HCT116 (cell line): ENCODE measurements at regions of chr12 and their contacts with region 1.

Region 1: GRCh38 chr12:76348079-76348901 is at the start of gene BBS10:
- DNase-seq: peak; percentile 83
- ATAC-seq: peak; percentile 91
- H3K4me3 ChIP-seq: peak within 1 kb of the TSS; percentile 77 to 88
- H3K27ac ChIP-seq: peak within 1 kb of the TSS; percentile 86
- H3K4me1 ChIP-seq: peaks cover 23 to 48% of the 10 kb centered on the region in 2 experiments; a peak in 3 of 4 replicates
- H3K27me3 ChIP-seq: no peaks in the 10 kb centered on the region
- CTCF ChIP-seq: peak; percentile 33 to 63 (median 49); a peak in 4 of 6 replicates
- POLR2A ChIP-seq: peak; percentile 5
- RAD21 ChIP-seq: peak; percentile 44
- total RNA-seq, gene BBS10: 27.1 TPM

Region 2: DNA sequence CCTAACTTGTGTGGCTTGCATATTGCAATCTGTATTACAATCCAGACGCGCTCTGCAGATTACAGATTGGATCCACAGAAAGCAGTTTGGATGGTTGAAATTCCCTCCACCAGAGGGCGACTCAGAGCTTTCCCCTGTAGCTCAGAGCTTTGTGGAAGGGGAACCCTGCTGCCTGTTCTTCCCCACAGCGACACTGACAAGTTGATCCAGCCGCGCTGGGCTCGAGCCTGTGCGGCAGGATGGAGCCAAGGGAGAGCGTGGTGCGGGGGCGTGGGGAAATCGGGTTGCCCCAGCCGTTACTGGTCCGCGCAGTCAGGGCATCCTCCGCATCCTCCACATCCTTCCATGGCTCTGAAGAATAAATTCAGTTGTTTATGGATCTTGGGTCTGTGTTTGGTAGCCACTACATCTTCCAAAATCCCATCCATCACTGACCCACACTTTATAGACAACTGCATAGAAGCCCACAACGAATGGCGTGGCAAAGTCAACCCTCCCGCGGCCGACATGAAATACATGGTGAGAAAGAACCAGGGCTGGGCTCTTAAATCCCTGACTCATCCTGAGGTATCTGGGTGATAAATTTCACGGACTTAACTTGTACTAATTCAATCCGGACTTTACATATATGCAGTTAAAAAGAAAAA is 1013.8 kb before region 1 on chr12 and contains the start of gene GLIPR1L1:
- CTCF ChIA-PET with region 1: no interaction called
- POLR2A ChIA-PET with region 1: no interaction called
- RAD21 ChIA-PET with region 1: no interaction called
- intact Hi-C with region 1: loop called (anchors 5 kb)
- DNase-seq: peak; percentile 92
- ATAC-seq: peak; percentile 86
- H3K4me3 ChIP-seq: peak within 1 kb of the TSS; percentile 42 to 57
- H3K27ac ChIP-seq: peak within 1 kb of the TSS; percentile 63
- H3K4me1 ChIP-seq: peaks cover 16 to 25% of the 10 kb centered on the region in 2 experiments
- H3K27me3 ChIP-seq: no peaks in the 10 kb centered on the region
- CTCF ChIP-seq: peak; percentile 75 to 83 (median 75)
- POLR2A ChIP-seq: no peak
- RAD21 ChIP-seq: peak; percentile 86
- total RNA-seq, gene GLIPR1L1: not detected

Region 3: DNA sequence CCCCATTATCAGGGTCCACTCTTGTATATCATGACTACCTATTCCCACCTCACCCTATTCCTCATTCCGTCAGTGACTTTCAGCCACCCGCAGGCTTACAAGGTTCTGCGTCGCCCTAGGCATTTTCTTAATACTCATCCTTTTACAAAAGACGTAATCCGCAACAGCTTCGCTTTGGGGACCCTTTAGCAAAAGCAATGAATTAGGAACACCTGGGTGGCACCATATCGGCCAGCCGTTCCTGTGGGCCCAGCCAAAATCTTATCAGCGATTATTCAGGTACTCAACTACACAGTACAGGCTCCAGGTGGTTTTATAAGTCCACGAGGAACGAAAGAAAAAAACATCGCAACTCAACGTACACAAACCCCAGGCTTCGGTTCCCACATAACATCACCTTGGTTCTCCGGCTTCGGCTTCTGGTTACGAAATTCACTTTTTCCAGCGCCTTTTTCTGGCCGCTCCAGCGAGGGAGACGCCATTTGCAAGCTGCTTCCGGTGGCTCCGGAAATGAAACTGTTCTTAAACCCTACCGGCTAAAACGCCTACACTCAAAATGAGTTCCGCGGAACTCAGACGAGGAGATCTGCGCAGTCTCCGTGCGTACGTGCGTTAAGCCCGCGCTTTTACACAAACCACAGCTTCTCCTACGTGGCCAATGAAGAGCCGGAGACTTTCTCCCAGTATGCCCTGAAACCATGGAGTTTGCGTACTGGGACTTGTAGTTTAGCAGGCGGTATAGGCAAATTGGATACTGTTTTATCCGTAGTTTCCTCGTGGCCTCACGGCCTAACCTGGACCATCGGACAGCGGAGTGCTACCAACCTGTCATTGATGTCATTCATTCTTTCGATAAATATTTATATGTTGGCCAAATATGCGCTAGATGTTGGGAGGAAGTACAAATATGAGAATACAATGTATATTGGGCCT is 836.9 kb before region 1 on chr12 and contains the start of gene KRR1:
- CTCF ChIA-PET with region 1: no interaction called
- POLR2A ChIA-PET with region 1: no interaction called
- RAD21 ChIA-PET with region 1: no interaction called
- intact Hi-C with region 1: loop called (anchors 5 kb)
- DNase-seq: peak; percentile 99
- ATAC-seq: peak; percentile 99
- H3K4me3 ChIP-seq: peak within 1 kb of the TSS; percentile 77 to 90
- H3K27ac ChIP-seq: peak within 1 kb of the TSS; percentile 61
- H3K4me1 ChIP-seq: peaks cover 19 to 32% of the 10 kb centered on the region in 2 experiments
- H3K27me3 ChIP-seq: no peaks in the 10 kb centered on the region
- CTCF ChIP-seq: 0 out of 6 replicates have a peak, but pooled peaks of 1 of the 3 experiments have one; percentile 3
- POLR2A ChIP-seq: peak; percentile 27
- RAD21 ChIP-seq: peak; percentile 21; the same call in 1 of the 2 replicates
- total RNA-seq, gene KRR1: 192 TPM

Region 4: DNA sequence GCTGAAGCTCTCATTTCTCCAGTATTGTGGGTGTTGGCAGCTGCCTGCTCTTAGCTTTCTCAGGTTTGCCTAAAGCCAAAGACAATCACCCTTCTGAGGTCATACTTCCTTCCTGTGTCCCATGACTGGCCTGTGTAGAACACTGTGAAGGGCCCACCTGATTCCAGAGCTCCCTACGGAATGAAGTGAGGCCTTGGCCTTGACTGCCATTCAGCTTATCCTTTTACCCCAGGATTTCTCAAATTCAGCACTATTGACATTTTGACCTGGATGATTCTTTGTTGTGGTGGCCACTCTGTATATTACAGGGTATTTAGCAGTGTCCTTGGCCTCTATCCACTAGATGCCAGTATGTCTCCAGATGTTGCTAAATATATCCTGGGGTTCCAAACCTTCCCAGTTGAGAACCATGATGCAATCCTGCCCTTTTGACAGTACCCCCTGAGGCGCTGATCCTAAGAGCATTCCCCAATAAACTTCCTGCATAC is 724.6 kb before region 1 on chr12:
- CTCF ChIA-PET with region 1: interaction called, 3 read pairs
- POLR2A ChIA-PET with region 1: interaction called, 4 read pairs
- RAD21 ChIA-PET with region 1: no interaction called
- intact Hi-C with region 1: loop called (anchors 5 kb)
- DNase-seq: peak; percentile 89
- ATAC-seq: peak; percentile 92
- H3K4me3 ChIP-seq: no peak overlapping the region
- H3K27ac ChIP-seq: peak overlapping the region; percentile 99
- H3K4me1 ChIP-seq: peaks cover 39 to 70% of the 10 kb centered on the region in 2 experiments
- H3K27me3 ChIP-seq: no peaks in the 10 kb centered on the region
- CTCF ChIP-seq: peak; percentile 49 to 64 (median 51); a peak in 5 of 6 replicates
- POLR2A ChIP-seq: peak; percentile 26
- RAD21 ChIP-seq: peak; percentile 81

Region 5: DNA sequence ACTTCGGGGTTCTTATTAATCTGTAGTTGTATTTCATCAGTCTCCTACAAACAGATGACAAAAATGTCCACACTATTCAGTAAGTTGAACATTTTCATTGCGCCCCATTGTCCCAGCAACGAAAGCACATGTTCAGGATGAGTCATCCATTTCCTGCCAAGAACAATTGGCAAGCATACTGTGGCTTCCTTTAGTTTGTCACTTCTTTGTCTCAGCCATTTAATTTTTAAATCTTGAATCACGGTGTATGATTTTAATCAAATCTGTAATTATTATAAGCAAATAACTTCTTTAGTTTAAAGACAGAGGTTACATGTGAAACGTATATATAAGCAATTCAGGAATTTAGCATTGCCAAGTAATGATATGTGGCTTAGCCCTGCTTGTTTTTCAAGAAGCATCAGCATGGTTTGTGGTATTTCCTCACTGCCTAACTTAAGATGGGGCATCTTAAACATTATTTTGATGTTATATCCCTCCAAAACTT is 625.5 kb before region 1 on chr12:
- CTCF ChIA-PET with region 1: no interaction called
- POLR2A ChIA-PET with region 1: interaction called, 4 read pairs
- RAD21 ChIA-PET with region 1: no interaction called
- intact Hi-C with region 1: loop called (anchors 5 kb)
- DNase-seq: peak; percentile 77
- ATAC-seq: no peak
- H3K4me3 ChIP-seq: no peak overlapping the region
- H3K27ac ChIP-seq: peak overlapping the region; percentile 100
- H3K4me1 ChIP-seq: peaks cover 87 to 96% of the 10 kb centered on the region in 2 experiments
- H3K27me3 ChIP-seq: no peaks in the 10 kb centered on the region
- CTCF ChIP-seq: no peak
- POLR2A ChIP-seq: no peak
- RAD21 ChIP-seq: no peak

Region 6: GRCh38 chr12:76455582-76456345 is 107.5 kb after region 1 on chr12:
- CTCF ChIA-PET with region 1: no interaction called
- POLR2A ChIA-PET with region 1: interaction called, 3 read pairs
- RAD21 ChIA-PET with region 1: no interaction called
- intact Hi-C with region 1: loop called (anchors 1 kb)
- DNase-seq: peak; percentile 90
- ATAC-seq: peak; percentile 84
- H3K4me3 ChIP-seq: 0 out of 4 replicates have a peak overlapping the region, but pooled peaks of 1 of the 2 experiments have one; percentile 3
- H3K27ac ChIP-seq: peak overlapping the region; percentile 81
- H3K4me1 ChIP-seq: peaks cover 42 to 60% of the 10 kb centered on the region in 2 experiments
- H3K27me3 ChIP-seq: no peaks in the 10 kb centered on the region
- CTCF ChIP-seq: peak; percentile 57 to 82 (median 74)
- POLR2A ChIP-seq: peak; percentile 78
- RAD21 ChIP-seq: peak; percentile 96

Region 7: GRCh38 chr12:77247542-77247941 is 899.3 kb after region 1 on chr12:
- CTCF ChIA-PET with region 1: no interaction called
- POLR2A ChIA-PET with region 1: no interaction called
- RAD21 ChIA-PET with region 1: no interaction called
- intact Hi-C with region 1: no loop called
- DNase-seq: no peak
- ATAC-seq: no peak
- H3K4me3 ChIP-seq: no peak overlapping the region
- H3K27ac ChIP-seq: no peak overlapping the region
- H3K4me1 ChIP-seq: no peaks in the 10 kb centered on the region
- H3K27me3 ChIP-seq: no peaks in the 10 kb centered on the region
- CTCF ChIP-seq: no peak
- POLR2A ChIP-seq: no peak
- RAD21 ChIP-seq: no peak